B cell (primary cell): ENCODE measurements at regions of chr11 and their contacts with region 1.

Region 1: GRCh38 chr11:73177778-73178577 is 35.9 kb upstream of the FCHSD2 start:
- DNase-seq: peak; percentile 88
- ATAC-seq: peak; percentile 99
- H3K4me3 ChIP-seq: peak overlapping the region in 1 of 5 experiments; percentile 16
- H3K4me3 Mint-ChIP-seq: peak overlapping the region; percentile 37
- H3K27ac ChIP-seq: peak overlapping the region; percentile 17 to 19
- H3K27ac Mint-ChIP-seq: peak overlapping the region; percentile 81
- H3K4me1 ChIP-seq: peaks cover 32 to 40% of the 10 kb centered on the region in 2 donors
- H3K4me1 Mint-ChIP-seq: peaks cover 38% of the 10 kb centered on the region
- H3K27me3 ChIP-seq: no peaks in the 10 kb centered on the region
- H3K27me3 Mint-ChIP-seq: no peaks in the 10 kb centered on the region
- CTCF ChIP-seq: peak; percentile 93

Region 2: DNA sequence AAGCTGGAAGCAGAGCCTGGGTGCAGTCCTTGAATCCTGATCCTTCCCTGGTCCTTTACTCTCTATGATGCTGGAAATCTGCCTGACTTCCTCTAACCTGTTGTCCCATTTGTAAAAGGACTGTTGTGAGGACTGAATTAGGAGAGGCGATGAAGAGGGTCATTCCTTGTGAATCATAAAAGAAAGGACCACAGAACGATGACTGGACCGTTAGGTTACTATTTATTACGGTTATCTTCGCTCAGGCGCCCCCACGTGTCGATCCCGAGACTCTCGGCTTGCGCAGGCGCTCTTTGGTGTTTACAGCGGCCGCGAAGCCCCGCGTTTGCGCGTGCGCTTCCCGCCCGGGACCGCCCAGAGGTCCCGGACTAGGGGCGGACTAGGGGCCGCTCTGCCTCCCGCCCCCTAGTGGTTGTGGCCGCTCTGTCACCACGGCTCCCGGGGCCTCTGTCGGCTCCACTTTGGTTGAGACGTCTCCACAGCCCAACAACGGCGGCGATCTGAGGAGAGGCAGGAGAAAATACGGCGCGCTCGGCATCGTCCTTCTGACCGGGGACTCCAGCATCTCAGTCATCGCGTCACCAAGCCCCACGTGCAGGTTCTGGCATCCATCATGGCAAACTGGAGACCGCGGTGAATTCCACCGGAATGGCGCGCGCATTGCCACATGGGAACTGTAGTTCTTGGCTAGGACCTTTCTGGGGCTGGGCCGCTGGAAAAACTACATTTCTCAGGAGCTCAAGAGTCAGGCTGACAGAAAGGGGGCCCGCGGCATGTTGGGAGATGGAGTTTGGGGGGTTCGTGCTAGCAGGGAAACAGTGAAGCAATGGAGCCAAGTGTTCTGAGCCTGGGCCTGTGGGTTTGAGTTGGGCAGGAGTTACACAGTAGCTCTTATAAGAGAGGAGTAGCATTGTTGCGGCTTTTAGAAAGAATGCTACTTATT is 384.3 kb before region 1 on chr11 and contains the start of gene STARD10:
- CTCF ChIA-PET with region 1: interaction called, 14 read pairs
- POLR2A ChIA-PET with region 1: no interaction called
- intact Hi-C with region 1: no loop called
- DNase-seq: peak; percentile 98
- ATAC-seq: peak; percentile 94
- H3K4me3 ChIP-seq: peak within 1 kb of the TSS; percentile 60 to 98 (median 85)
- H3K4me3 Mint-ChIP-seq: peak within 1 kb of the TSS; percentile 99
- H3K27ac ChIP-seq: peak within 1 kb of the TSS; percentile 94 to 97
- H3K27ac Mint-ChIP-seq: peak within 1 kb of the TSS; percentile 100
- H3K4me1 ChIP-seq: peaks cover 19 to 28% of the 10 kb centered on the region in 2 donors
- H3K4me1 Mint-ChIP-seq: peaks cover 36% of the 10 kb centered on the region
- H3K27me3 ChIP-seq: no peaks in the 10 kb centered on the region
- H3K27me3 Mint-ChIP-seq: no peaks in the 10 kb centered on the region
- CTCF ChIP-seq: peak; percentile 94
- total RNA-seq, gene STARD10: 29.4 and 39.2 TPM in 2 replicates

Region 3: DNA sequence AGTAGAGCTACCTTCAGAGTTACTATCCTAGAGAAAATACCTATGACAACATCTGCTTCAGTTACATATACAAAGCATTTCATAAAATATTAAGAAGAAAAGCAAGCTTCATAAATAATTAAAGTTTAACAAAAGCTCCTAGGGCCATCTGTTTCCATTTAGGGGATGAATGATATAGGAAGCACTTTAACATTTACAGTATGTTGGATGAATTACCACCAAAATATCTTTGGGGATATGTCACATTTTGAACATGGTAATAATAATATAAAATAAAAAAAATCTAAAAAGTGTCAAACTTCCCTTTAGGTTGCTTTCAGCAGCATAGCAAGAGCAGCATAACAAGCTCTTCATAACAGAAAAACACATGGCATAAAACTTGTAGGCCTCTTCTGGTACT is 259.1 kb before region 1 on chr11:
- CTCF ChIA-PET with region 1: interaction called, 187 read pairs
- POLR2A ChIA-PET with region 1: no interaction called
- intact Hi-C with region 1: loop called (anchors 1 kb)
- DNase-seq: no peak
- ATAC-seq: no peak
- H3K4me3 ChIP-seq: no peak overlapping the region
- H3K4me3 Mint-ChIP-seq: no peak overlapping the region
- H3K27ac ChIP-seq: peak overlapping the region in 1 of 2 donors; percentile 54
- H3K27ac Mint-ChIP-seq: no peak overlapping the region
- H3K4me1 ChIP-seq: no peaks in the 10 kb centered on the region
- H3K4me1 Mint-ChIP-seq: peaks cover 13% of the 10 kb centered on the region
- H3K27me3 ChIP-seq: no peaks in the 10 kb centered on the region
- H3K27me3 Mint-ChIP-seq: no peaks in the 10 kb centered on the region
- CTCF ChIP-seq: no peak

Region 4: DNA sequence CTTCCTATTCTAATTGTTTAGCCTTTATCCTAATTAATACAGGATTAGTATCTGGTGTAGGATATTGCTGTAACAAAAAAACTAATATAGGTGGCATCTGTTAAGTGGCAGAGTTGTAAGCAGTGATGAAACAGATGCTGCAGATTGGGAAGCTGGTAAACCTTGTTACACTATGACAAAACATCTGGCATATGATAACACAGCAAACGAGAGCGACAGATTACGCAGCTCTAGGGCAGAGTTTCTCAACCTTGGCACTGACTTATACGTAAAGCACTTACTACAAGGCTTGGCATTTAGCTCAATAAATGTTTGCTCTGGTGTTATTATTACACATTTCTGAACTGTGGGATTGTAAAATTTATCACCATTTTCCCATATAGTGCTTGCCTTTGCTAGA is 226.8 kb before region 1 on chr11:
- CTCF ChIA-PET with region 1: no interaction called
- POLR2A ChIA-PET with region 1: no interaction called
- intact Hi-C with region 1: no loop called
- DNase-seq: no peak
- ATAC-seq: no peak
- H3K4me3 ChIP-seq: peak overlapping the region in 1 of 5 experiments; percentile 37
- H3K4me3 Mint-ChIP-seq: peak overlapping the region; percentile 74
- H3K27ac ChIP-seq: peak overlapping the region; percentile 64 to 82
- H3K27ac Mint-ChIP-seq: peak overlapping the region; percentile 76
- H3K4me1 ChIP-seq: peaks cover 53 to 60% of the 10 kb centered on the region in 2 donors
- H3K4me1 Mint-ChIP-seq: peaks cover 67% of the 10 kb centered on the region
- H3K27me3 ChIP-seq: no peaks in the 10 kb centered on the region
- H3K27me3 Mint-ChIP-seq: no peaks in the 10 kb centered on the region
- CTCF ChIP-seq: no peak

Region 5: GRCh38 chr11:72962084-72962483 is 215.9 kb before region 1 on chr11:
- CTCF ChIA-PET with region 1: no interaction called
- POLR2A ChIA-PET with region 1: no interaction called
- intact Hi-C with region 1: no loop called
- DNase-seq: no peak
- ATAC-seq: no peak
- H3K4me3 ChIP-seq: no peak overlapping the region
- H3K4me3 Mint-ChIP-seq: no peak overlapping the region
- H3K27ac ChIP-seq: peak overlapping the region in 1 of 2 donors; percentile 6
- H3K27ac Mint-ChIP-seq: peak overlapping the region; percentile 26
- H3K4me1 ChIP-seq: peaks cover 9 to 11% of the 10 kb centered on the region in 2 donors
- H3K4me1 Mint-ChIP-seq: peaks cover 24% of the 10 kb centered on the region
- H3K27me3 ChIP-seq: no peaks in the 10 kb centered on the region
- H3K27me3 Mint-ChIP-seq: no peaks in the 10 kb centered on the region
- CTCF ChIP-seq: no peak

Region 6: DNA sequence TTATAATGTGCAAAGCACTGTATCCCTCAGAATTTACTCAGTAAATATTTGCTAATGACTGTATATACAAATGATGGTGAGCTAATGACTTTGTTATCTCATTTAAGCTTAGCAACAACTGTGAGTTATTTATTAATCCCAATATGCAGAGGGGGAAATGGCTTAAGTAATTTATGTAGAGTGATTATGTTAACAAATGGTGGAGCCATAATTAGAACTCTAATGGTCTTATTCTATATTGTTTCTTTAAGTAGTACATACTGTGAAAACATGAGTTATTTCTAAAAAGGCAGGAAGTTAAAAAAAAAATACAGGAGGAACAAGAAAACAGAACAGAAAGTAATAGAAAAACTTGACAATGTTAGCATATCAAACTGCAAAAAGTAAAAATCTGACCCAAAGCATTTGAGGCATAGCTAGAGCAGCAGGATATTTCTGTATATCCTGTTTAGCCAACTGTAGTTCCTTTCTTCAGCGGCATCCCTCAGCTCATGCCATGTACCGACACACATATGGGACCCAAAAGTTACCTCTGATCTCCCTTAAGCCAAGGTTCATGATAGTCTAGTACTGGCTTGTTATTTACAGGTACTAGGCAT is 130.1 kb before region 1 on chr11:
- CTCF ChIA-PET with region 1: interaction called, 16 read pairs
- POLR2A ChIA-PET with region 1: no interaction called
- intact Hi-C with region 1: loop called (anchors 5 kb)
- DNase-seq: peak; percentile 80
- ATAC-seq: peak; percentile 91
- H3K4me3 ChIP-seq: peak overlapping the region; percentile 14 to 52 (median 32)
- H3K4me3 Mint-ChIP-seq: peak overlapping the region; percentile 79
- H3K27ac ChIP-seq: peak overlapping the region; percentile 81 to 89
- H3K27ac Mint-ChIP-seq: peak overlapping the region; percentile 88
- H3K4me1 ChIP-seq: peaks cover 68 to 80% of the 10 kb centered on the region in 2 donors
- H3K4me1 Mint-ChIP-seq: peaks cover 66% of the 10 kb centered on the region
- H3K27me3 ChIP-seq: no peaks in the 10 kb centered on the region
- H3K27me3 Mint-ChIP-seq: no peaks in the 10 kb centered on the region
- CTCF ChIP-seq: no peak

Region 7: DNA sequence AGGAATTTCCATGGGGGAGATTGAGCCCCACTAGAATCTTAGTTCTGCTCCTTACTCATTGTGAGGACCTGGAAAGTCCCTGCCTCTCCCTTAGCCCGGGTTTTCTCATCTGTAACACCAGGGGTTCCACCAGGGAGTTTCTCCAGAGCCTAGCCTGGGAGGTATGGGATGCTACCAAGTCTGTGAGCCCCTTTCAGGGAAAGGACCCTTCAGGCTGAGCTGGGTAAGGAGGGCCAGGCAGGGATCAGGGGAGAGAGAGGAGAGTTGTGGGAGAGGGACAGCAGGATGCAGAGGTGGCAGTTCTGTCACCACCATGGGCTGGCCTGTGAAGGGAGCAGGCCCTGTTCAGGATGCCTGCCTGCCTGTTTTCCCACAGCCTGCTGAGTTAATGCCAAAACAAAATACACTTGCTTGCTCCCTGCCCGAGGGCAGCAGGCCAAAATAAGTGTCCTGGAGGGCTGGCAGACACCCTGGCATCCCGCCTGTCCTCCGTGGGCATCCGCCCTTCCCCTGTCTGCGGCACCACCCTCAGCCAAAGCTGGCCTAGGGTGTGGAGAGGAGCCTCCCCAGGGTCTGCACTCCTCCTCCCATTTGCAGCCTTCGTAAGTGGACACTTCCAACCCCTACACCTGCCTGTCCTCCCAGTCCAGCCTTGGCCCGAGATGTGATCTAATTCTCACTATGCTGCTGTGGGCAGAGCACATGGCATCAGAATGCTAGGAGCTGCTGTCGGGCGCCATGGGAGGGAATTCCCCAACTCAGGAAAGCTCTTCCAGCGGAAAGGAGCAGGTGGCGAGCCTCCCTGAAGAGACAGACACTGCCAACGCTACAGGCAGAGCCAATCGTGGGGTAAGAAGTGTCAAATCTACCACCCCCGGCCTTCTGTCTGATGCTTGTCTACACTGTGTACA is 30.0 kb before region 1 on chr11:
- CTCF ChIA-PET with region 1: interaction called, 271 read pairs
- POLR2A ChIA-PET with region 1: interaction called, 62 read pairs
- intact Hi-C with region 1: no loop called
- DNase-seq: peak; percentile 23
- ATAC-seq: no peak
- H3K4me3 ChIP-seq: no peak overlapping the region
- H3K4me3 Mint-ChIP-seq: peak overlapping the region; percentile 45
- H3K27ac ChIP-seq: peak overlapping the region; percentile 3 to 64
- H3K27ac Mint-ChIP-seq: peak overlapping the region; percentile 91
- H3K4me1 ChIP-seq: peaks cover 98 to 100% of the 10 kb centered on the region in 2 donors
- H3K4me1 Mint-ChIP-seq: peaks cover 98% of the 10 kb centered on the region
- H3K27me3 ChIP-seq: no peaks in the 10 kb centered on the region
- H3K27me3 Mint-ChIP-seq: no peaks in the 10 kb centered on the region
- CTCF ChIP-seq: no peak

Region 8: GRCh38 chr11:73288873-73289707 is 111.1 kb after region 1 on chr11:
- CTCF ChIA-PET with region 1: interaction called, 65 read pairs
- POLR2A ChIA-PET with region 1: no interaction called
- intact Hi-C with region 1: no loop called
- DNase-seq: peak; percentile 91
- ATAC-seq: peak; percentile 94
- H3K4me3 ChIP-seq: peak overlapping the region in 2 of 5 experiments; percentile 16 to 21
- H3K4me3 Mint-ChIP-seq: peak overlapping the region; percentile 85
- H3K27ac ChIP-seq: peak overlapping the region; percentile 67 to 71
- H3K27ac Mint-ChIP-seq: peak overlapping the region; percentile 89
- H3K4me1 ChIP-seq: peaks cover 23 to 32% of the 10 kb centered on the region in 2 donors
- H3K4me1 Mint-ChIP-seq: peaks cover 33% of the 10 kb centered on the region
- H3K27me3 ChIP-seq: peaks cover 0 to 11% (median 0%) of the 10 kb centered on the region in 4 experiments
- H3K27me3 Mint-ChIP-seq: peaks cover 6% of the 10 kb centered on the region
- CTCF ChIP-seq: peak; percentile 93